ENCODE measurements at regions of chr11 and their contacts with region 1.

Region 1: DNA sequence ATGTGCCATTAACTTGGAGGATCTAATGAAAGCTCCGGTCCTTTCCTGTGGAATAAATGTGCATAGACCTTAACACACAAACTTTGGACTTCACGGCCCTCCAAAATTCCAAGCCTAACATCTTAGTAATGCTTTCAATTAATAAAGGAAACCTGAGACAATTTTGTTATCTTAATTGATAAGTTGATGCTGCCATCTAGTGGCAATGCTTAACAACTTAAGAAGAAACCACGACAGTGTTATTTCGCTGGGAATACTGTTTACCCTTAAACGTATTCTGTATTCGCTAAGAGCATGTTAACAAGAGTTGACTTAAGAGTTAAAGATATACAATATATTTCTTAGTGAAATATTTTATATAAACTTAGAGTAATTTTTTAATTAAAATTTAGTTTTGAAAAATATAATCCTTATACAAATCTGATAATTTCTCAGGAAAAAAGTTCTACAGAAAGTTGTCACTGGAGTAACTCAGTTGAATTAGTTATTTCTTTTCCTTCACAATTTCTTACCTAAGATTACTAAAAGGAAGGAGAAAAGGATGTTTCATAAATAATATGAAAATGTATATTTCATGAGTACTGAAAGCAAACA is 35.0 kb upstream of the OR9G4 start:
- DNase-seq: no peak
- H3K4me3 ChIP-seq: no peak overlapping the region
- H3K27ac ChIP-seq: no peak overlapping the region
- H3K27me3 ChIP-seq: peaks cover 0 to 12% (median 0%) of the 10 kb centered on the region in 45 donors
- CTCF ChIP-seq: peak in 55 of 56 donors; percentile 46 to 86 (median 68)

Region 2: GRCh38 chr11:55942785-55943392 is 840.7 kb before region 1 on chr11:
- intact Hi-C with region 1: loop called (anchors 5 to 10 kb)
- DNase-seq: no peak
- H3K4me3 ChIP-seq: no peak overlapping the region
- H3K27ac ChIP-seq: no peak overlapping the region
- H3K27me3 ChIP-seq: peaks cover 0 to 5% (median 0%) of the 10 kb centered on the region in 45 donors
- CTCF ChIP-seq: peak in 55 of 56 donors; percentile 14 to 77 (median 59)

Region 3: DNA sequence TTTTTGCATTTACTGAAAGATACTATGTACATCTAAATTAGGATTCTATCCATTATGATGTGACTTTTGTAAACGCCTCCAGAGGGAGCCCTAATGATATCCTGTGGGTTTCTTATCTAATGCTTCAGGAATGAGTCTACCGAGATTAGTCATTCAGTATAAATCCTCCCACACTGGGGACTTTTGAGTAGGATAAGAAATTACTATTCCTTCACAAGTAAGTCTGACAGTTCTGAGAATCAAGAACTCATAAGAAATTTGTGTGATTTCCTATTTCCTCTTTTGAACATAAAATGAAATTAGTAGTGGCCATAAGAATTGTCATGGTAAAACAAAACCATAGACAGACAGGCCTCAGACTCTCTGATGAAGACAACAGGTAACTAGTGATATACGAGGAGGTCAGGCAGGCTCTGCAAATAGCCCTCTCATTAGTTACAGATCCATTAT is 158.9 kb before region 1 on chr11:
- intact Hi-C with region 1: loop called in 1 of 2 experiments (anchors 10 kb)
- DNase-seq: no peak
- H3K4me3 ChIP-seq: no peak overlapping the region
- H3K27ac ChIP-seq: no peak overlapping the region
- H3K27me3 ChIP-seq: no peaks in the 10 kb centered on the region
- CTCF ChIP-seq: peak in 50 of 56 donors; percentile 13 to 56 (median 40)